ENCODE measurements at regions of chr12 and their contacts with region 1.

Region 1: GRCh38 chr12:153080-153746 is 60.7 kb downstream of the SLC6A12 start:
- H3K4me3 ChIP-seq: no peak overlapping the region
- H3K27ac ChIP-seq: no peak overlapping the region
- H3K4me1 ChIP-seq: no peaks in the 10 kb centered on the region
- CTCF ChIP-seq: peak; percentile 98

Region 2: DNA sequence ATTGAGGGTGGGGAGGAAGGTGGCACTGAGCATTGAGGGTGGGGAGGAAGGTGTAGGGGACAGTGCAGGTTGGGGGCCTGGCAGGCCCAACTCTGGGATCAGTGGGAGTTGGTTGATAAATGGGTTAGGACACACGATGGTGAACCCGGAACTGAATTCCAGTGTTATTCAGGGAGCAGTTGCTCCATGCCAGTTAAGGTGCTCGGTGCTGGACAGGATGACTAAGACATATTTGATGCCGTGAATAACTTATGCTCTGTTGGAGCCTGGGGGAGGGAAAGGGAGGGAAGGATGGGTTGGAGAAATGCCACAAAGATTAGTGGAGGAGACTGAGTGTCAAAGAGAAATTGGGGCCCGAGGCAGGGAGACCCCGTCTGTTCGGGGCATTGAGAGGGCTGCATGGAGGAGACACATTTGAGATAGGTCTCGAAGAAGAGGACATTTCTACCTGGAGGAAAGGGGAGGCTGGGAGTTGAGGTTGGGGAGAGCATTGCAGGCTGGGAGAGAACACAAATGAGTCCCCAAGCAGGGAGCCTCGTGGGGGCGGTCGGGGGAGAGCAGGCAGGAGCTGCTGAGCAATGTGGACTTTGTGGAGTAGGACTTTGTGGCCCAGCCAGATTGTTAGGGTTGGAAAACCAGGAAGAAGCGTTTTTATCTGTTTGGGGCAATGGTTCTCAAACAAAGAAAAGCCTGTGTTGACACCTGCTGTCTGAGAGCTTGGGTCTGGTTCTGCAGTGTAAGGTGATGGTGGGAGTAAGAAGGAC is 21.3 kb before region 1 on chr12:
- CTCF ChIA-PET with region 1: interaction called, 11 read pairs
- POLR2A ChIA-PET with region 1: no interaction called
- H3K4me3 ChIP-seq: no peak overlapping the region
- H3K27ac ChIP-seq: no peak overlapping the region
- H3K4me1 ChIP-seq: no peaks in the 10 kb centered on the region
- CTCF ChIP-seq: no peak

Region 3: DNA sequence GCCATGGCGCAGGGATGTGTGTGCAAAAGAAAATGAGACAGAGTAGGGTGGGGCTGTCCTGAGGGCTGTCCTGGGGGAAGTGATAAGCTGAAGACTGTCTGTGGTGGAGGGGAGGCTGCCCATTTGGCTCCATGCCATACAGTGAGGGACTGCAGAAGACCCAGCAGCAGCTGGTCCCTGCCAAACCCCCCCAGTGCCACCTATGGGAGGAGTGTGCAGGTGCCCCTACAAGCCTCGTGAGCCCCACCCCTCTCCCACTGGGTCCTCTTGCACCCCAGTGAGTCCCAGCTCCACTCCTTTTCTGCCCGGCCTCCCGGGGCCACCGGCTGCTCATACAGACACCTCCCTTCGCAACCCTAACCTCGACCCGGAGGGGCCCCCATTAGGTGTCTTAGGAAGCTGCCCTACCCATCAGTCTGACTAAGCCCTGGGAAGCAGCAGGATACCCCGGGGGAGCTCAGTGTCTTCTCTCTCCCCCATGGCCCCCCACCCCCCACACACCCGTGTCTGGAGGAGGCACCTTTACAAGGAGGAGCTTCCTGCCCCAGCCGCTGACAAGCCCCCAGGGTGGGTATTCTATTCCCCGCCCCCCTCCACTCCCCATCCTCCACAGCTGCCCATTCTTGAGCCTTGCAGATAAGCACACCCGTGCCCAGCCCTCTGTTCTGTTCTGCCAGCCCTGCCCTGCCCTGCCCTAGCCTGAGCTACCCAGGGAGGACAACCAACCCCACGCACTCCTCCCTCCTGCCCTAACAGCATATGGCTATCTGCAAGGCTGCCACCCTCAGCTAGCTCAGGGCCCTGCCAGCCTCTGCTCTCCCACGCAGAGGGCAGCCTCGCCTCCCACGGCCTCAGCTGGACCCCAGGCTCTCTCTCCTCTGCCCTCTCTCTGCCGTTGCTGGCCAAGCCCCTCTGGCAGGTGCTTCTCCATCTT is 18.8 kb after region 1 on chr12:
- CTCF ChIA-PET with region 1: interaction called, 11 read pairs
- POLR2A ChIA-PET with region 1: no interaction called
- H3K4me3 ChIP-seq: no peak overlapping the region
- H3K27ac ChIP-seq: no peak overlapping the region
- H3K4me1 ChIP-seq: no peaks in the 10 kb centered on the region
- CTCF ChIP-seq: no peak

Region 4: DNA sequence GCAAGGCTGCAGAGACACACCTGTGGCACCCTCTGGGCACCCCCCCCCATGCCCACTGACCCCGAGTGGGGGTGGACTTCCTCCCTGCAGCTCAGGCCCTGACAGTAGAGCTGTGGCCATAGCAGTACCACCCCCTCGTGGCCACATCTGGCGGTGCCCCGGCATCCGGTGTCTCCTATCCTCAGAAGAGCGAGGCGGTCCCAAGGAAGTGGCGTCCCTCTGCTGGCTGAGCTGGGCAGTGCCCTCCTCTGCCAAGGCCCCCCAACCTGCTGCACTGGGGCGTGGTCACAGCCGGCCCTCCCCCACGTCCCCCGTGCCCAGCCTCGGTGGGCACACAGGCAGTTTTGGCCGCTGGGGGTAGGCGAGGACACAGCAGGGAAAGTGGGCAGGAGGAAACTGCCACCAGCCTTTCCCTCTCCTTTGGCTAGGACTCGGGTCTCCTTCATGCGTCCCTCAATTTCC is 66.7 kb after region 1 on chr12:
- CTCF ChIA-PET with region 1: interaction called, 20 read pairs
- POLR2A ChIA-PET with region 1: no interaction called
- H3K4me3 ChIP-seq: no peak overlapping the region
- H3K27ac ChIP-seq: no peak overlapping the region
- H3K4me1 ChIP-seq: no peaks in the 10 kb centered on the region; the same call in 1 of the 2 replicates
- CTCF ChIP-seq: peak; percentile 94

Region 5: GRCh38 chr12:304805-305204 is 151.6 kb after region 1 on chr12:
- CTCF ChIA-PET with region 1: interaction called, 10 read pairs
- POLR2A ChIA-PET with region 1: no interaction called
- H3K4me3 ChIP-seq: no peak overlapping the region
- H3K27ac ChIP-seq: no peak overlapping the region; the same call in 1 of the 2 replicates
- H3K4me1 ChIP-seq: 0 out of 2 replicates have a peak, but pooled peaks cover 2% of the 10 kb centered on the region
- CTCF ChIP-seq: no peak

Measured in HEK293 (cell line).